Activated T-helper 2 cell treated with anti-CD3 and anti-CD28 coated beads, Interferon-gamma antibody, Interleukin-2, Interleukin-4, amounts not matched to agents 10 μg/mL and 5 μg/mL and 100 μg/mL, durations not matched to agents 14 hours and 24 hours and 36 hours (primary cell): ENCODE measurements at regions of chr10 and their contacts with region 1.

Region 1: DNA sequence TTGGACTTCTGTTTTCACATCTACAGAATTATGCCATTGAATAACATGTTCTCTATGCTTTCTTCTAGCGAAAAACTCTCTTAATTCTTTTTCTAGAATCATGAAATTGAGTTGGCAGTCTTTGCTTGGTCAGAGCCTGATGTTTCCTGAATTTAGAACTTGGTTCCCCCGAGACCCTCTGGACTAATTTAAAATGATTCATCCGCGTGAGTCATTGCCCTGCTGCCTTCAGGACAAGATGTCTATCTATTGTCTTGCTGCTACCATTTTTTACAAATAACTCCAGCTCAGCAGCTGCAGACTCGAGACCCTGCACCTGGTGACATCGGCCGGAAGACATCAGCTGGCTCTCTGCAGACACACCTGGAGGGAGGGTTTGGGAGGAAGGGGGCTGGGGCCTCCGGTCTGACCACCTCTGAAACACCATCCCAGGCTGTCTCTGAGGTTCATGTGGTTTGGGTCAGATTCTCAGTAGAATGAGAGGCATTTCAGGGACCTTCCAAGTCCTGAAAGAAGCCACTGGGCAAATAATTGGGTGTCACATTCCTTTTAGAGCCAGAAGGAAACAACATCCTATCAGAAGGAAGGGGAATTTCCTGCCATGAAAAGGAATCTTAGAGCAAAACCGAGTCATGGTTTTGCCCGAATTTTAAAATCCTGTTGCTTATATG is 20.9 kb upstream of the KLF6 start:
- DNase-seq: peak; percentile 42
- H3K4me3 Mint-ChIP-seq: peak overlapping the region; percentile 3
- H3K27ac Mint-ChIP-seq: peak overlapping the region; percentile 98
- H3K4me1 Mint-ChIP-seq: peaks cover 70% of the 10 kb centered on the region
- H3K27me3 Mint-ChIP-seq: no peaks in the 10 kb centered on the region

Region 2: DNA sequence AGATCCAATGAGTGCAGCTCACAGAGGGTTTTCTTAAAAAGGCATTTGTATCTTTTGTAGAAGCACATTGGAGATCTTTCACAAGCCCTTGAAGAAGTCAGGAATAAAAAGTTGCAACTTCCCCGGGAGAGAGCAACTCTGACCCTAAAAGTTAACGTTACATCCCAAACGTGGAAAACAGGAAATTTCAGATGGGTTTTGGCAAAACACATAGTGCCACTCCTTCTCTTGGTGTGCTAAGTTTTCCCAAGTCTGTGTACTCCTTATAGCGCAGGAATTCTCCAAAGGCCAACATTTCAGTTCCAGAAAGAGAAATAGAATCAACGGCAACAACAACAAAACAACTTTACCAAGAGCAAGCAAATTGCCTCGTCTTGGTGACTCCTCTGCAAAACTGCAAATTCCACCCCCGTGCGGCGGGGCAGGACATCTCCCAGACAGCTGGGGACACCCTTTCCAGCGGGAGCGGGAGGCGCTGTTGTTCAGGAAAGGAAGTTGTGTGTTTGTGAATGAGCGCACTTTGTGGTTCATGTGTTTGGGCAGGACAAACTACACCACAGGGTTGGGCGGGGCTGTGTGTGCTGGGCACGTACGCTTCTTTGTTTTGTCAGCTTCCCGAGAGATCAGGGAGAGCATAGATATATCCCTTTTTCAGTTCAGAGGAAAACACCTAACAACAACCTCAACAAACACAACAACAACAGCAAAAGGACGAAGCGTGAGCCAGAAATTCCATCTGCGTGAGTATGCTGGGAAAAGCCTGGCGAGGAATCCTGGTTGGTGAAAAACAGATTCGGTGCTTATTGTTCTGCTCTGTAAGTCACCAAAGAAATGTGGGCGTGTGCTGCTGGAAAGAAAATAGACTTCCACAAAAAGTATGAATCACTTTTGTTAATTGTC is 338.6 kb before region 1 on chr10:
- intact Hi-C with region 1: loop called (anchors 2 kb)
- DNase-seq: no peak
- H3K4me3 Mint-ChIP-seq: peak overlapping the region; percentile 73
- H3K27ac Mint-ChIP-seq: peak overlapping the region; percentile 92
- H3K4me1 Mint-ChIP-seq: peaks cover 63% of the 10 kb centered on the region
- H3K27me3 Mint-ChIP-seq: no peaks in the 10 kb centered on the region

Region 3: DNA sequence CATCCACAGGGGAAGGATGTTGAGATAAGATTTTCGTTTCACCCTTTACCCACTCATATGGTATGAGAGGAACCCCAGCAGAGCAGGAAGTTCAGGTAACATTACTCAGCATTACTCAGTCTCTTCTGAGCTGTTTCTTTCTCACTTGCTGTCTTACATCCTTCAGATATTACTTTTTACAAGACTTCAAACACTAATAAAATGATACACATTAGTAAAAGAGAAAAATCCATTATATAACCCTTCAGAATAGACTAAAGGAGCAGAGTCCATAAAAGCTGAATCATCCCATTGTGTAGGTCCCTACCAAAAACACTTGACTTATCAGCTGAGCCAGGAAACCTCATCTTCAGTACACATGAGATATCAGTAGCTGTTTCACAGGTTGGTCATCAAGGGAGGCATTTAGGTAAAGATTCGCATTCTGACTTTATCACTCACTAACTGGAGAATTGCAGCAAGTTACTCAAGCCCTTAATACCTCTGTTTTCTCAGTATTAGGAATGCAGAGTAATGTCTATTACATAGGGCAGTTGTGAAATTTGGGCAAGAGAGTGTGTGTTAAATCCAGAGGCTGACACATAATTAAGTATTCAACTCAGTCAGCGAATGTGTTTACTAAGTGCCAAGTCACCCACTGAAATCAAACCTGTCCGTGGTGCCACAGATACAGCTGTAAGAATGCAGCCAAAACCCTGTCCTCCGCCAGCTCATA is 65.6 kb before region 1 on chr10:
- intact Hi-C with region 1: loop called (anchors 1 kb)
- DNase-seq: no peak
- H3K4me3 Mint-ChIP-seq: no peak overlapping the region
- H3K27ac Mint-ChIP-seq: no peak overlapping the region
- H3K4me1 Mint-ChIP-seq: peaks cover 27% of the 10 kb centered on the region
- H3K27me3 Mint-ChIP-seq: peaks cover 5% of the 10 kb centered on the region

Region 4: DNA sequence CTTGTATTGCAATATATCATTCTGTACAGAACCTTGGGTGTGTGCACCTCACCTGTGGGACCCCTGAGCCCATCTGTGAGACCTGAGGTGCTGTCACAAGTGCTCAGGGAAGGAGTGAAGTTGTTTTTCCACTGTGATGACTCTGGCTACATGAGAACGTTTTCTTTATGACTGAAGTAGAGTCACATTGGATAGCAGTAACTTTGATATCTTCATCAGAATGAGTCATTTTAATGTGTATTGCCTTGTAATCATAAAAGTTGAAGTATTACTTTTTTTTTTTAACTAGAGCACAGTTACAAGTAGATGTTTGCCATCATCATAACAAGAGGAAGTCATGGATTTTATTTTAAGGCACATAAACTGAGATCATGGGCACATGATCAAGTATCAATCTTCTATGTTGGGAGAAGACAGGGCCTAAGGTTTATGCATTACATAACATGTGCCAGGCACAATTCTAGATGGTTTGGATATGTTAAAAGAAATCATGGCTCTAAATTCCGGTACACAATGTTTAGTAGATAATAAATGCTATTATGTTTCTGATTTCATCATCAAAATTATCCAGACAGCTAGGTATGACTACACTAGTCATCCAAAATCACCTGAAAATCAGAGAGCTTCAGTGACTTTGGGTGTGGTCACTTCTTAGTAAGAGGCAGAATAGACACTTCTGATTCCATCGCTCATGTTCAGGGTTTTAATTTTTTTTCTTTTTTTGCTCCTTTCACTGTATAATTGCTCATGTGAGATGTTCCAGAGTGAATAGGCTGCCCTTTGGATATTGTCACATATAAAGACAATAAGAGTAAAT is 61.7 kb after region 1 on chr10:
- intact Hi-C with region 1: loop called (anchors 1 kb)
- DNase-seq: no peak
- H3K4me3 Mint-ChIP-seq: no peak overlapping the region
- H3K27ac Mint-ChIP-seq: peak overlapping the region; percentile 88
- H3K4me1 Mint-ChIP-seq: peaks cover 60% of the 10 kb centered on the region
- H3K27me3 Mint-ChIP-seq: no peaks in the 10 kb centered on the region

Region 5: DNA sequence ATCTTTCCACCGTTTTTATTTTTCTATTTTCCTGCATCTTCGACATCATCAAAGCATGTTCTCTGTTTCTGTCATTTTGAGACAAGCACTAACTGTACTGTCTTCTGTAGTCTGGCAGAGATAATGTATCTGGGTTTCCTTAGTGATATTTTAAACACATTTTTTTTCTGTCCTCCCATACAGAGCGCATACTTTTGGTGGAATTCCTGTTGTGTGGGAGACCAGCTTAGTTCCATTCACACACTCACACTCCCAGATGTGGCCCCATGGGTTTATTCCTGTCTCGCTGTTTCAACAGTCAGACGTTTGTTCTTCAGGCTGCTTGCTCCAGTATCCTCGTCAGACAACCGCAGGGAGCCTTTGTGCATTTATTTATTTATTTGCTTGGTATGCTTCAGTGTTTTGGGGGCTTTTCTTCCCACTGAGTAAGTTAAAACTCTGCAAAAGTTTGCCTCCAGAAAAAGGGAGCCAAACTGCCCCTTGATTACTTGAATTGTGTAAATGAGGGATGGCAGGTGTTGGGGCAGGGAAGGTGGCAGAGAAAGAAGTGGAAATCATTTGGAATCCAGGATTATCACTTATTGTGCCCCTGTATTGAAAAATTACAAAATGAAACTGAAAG is 435.9 kb after region 1 on chr10:
- intact Hi-C with region 1: loop called (anchors 10 kb)
- DNase-seq: no peak
- H3K4me3 Mint-ChIP-seq: no peak overlapping the region
- H3K27ac Mint-ChIP-seq: no peak overlapping the region
- H3K4me1 Mint-ChIP-seq: peaks cover 33% of the 10 kb centered on the region
- H3K27me3 Mint-ChIP-seq: peaks cover 3% of the 10 kb centered on the region

Region 6: DNA sequence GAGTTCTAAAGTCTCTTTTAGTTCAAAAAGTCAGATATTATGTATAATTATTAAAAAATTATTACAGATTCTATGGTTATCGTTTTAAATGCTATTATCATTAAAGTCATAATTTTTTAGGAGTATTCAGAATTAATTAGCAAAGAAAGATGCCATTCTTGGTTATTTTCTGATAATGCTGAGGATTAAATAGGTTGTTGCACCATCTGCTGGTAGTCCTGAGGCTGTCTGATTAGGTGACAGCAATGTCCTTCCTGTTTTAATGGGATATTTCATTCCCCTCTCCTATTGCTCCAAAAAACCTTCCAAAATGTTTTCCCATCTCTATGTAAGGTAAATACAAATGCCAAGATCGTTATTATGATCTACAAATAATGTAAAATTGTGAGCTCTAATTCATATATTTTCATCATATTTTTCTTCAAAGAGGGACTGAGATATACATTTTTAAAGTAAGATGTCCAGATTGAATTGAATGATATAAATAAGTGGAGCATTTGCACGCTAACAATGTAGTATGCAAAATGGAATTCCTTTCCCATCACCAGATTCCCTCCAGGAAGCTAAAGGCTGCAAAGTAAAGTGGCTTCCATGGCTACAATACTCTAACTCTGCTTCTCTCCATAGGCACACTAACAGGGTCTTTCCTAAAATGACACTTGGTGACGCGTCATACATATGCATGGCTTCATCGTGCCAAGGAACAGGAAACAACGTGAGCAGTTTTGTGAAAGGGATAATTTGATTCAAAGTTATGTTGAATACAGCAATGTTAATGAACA is 961.3 kb after region 1 on chr10:
- intact Hi-C with region 1: loop called (anchors 10 kb)
- DNase-seq: no peak
- H3K4me3 Mint-ChIP-seq: no peak overlapping the region
- H3K27ac Mint-ChIP-seq: no peak overlapping the region
- H3K4me1 Mint-ChIP-seq: no peaks in the 10 kb centered on the region
- H3K27me3 Mint-ChIP-seq: peaks cover 29% of the 10 kb centered on the region